B cell (primary cell): ENCODE measurements at regions of chr2 and their contacts with region 1.

Region 1: GRCh38 chr2:231463698-231464575 is at the start of gene NCL:
- DNase-seq: peak; percentile 98
- ATAC-seq: peak; percentile 51
- H3K4me3 ChIP-seq: peak within 1 kb of the TSS; percentile 62 to 97 (median 93)
- H3K4me3 Mint-ChIP-seq: peak within 1 kb of the TSS; percentile 99
- H3K27ac ChIP-seq: peak within 1 kb of the TSS; percentile 97 to 98
- H3K27ac Mint-ChIP-seq: peak within 1 kb of the TSS; percentile 100
- H3K4me1 ChIP-seq: peaks cover 29 to 33% of the 10 kb centered on the region in 2 donors
- H3K4me1 Mint-ChIP-seq: peaks cover 46% of the 10 kb centered on the region
- H3K27me3 ChIP-seq: no peaks in the 10 kb centered on the region
- H3K27me3 Mint-ChIP-seq: no peaks in the 10 kb centered on the region
- CTCF ChIP-seq: no peak
- total RNA-seq, gene NCL: 383 and 439 TPM in 2 replicates

Region 2: GRCh38 chr2:231056453-231057424 is 407.2 kb before region 1 on chr2 and contains the start of gene PSMD1:
- CTCF ChIA-PET with region 1: interaction called, 3 read pairs
- POLR2A ChIA-PET with region 1: interaction called, 4 read pairs
- intact Hi-C with region 1: loop called (anchors 5 kb)
- DNase-seq: peak; percentile 98
- ATAC-seq: peak; percentile 87
- H3K4me3 ChIP-seq: peak within 1 kb of the TSS; percentile 75 to 99 (median 90)
- H3K4me3 Mint-ChIP-seq: peak within 1 kb of the TSS; percentile 100
- H3K27ac ChIP-seq: peak within 1 kb of the TSS; percentile 85 to 86
- H3K27ac Mint-ChIP-seq: peak within 1 kb of the TSS; percentile 100
- H3K4me1 ChIP-seq: peaks cover 22 to 27% of the 10 kb centered on the region in 2 donors
- H3K4me1 Mint-ChIP-seq: peaks cover 39% of the 10 kb centered on the region
- H3K27me3 ChIP-seq: peaks cover 0 to 6% (median 0%) of the 10 kb centered on the region in 4 experiments
- H3K27me3 Mint-ChIP-seq: peaks cover 16% of the 10 kb centered on the region
- CTCF ChIP-seq: peak; percentile 91
- total RNA-seq, gene PSMD1: 45.4 and 48.2 TPM in 2 replicates

Region 3: DNA sequence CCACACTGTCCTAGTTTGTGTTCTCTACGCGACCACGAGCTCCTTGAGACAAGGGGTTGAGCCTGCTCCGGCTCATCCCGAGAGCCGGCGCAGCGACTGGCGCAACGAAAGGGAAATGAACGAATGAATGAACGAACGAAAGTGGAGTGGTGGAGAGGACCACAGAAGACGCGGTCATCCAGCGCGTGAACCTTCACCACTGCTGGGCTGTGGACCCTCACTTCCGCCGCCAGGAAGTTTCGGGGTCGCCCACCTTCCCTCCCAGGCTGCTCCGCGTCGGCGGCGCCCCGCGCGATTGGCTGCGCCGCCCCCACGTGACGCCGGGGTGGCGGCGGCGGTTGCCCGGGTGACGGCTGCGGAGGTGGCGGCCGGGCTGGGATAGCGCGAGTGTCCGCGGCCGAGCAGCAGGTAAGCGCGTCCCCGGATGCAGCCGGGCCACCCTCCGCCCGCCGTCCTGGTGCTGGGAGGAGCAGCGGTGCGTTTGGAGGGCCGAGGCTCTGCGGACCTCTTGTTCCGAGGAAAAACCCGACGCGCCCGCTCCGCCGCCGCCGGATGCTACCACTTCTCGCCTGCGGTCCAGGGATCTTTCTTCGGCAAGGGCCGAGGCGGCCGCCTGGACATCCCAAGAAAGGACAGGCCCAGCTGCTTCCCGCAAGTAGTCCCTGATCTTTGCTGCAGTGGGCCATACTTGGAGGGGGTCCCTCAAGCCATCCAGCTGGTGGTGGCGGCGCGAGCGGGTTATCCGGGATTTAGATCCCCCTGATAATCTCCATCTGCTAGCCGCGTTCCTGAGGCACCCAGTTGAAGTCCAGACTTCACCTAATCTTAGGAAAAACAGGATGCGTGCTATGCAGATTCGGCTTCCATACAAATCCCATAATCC is 265.4 kb before region 1 on chr2 and contains the start of gene ARMC9:
- CTCF ChIA-PET with region 1: no interaction called
- POLR2A ChIA-PET with region 1: no interaction called
- intact Hi-C with region 1: loop called (anchors 1 kb)
- DNase-seq: peak; percentile 84
- ATAC-seq: peak; percentile 98
- H3K4me3 ChIP-seq: peak within 1 kb of the TSS; percentile 68 to 96 (median 92)
- H3K4me3 Mint-ChIP-seq: peak within 1 kb of the TSS; percentile 95
- H3K27ac ChIP-seq: peak within 1 kb of the TSS in 1 of 2 donors; percentile 21
- H3K27ac Mint-ChIP-seq: peak within 1 kb of the TSS; percentile 50
- H3K4me1 ChIP-seq: peaks cover 8 to 12% of the 10 kb centered on the region in 2 donors
- H3K4me1 Mint-ChIP-seq: peaks cover 10% of the 10 kb centered on the region
- H3K27me3 ChIP-seq: peaks cover 0 to 5% (median 0%) of the 10 kb centered on the region in 4 experiments
- H3K27me3 Mint-ChIP-seq: peaks cover 11% of the 10 kb centered on the region
- CTCF ChIP-seq: no peak
- total RNA-seq, gene ARMC9: 5.2 and 5.4 TPM in 2 replicates

Region 4: GRCh38 chr2:231482806-231483391 is 19.0 kb after region 1 on chr2:
- CTCF ChIA-PET with region 1: interaction called, 34 read pairs
- POLR2A ChIA-PET with region 1: interaction called, 14 read pairs
- intact Hi-C with region 1: loop called (anchors 1 kb)
- DNase-seq: peak; percentile 82
- ATAC-seq: peak; percentile 85
- H3K4me3 ChIP-seq: peak overlapping the region in 4 of 5 experiments; percentile 58 to 65 (median 59)
- H3K4me3 Mint-ChIP-seq: peak overlapping the region; percentile 83
- H3K27ac ChIP-seq: peak overlapping the region; percentile 71 to 75
- H3K27ac Mint-ChIP-seq: peak overlapping the region; percentile 86
- H3K4me1 ChIP-seq: peaks cover 0 to 19% of the 10 kb centered on the region in 2 donors
- H3K4me1 Mint-ChIP-seq: peaks cover 7% of the 10 kb centered on the region
- H3K27me3 ChIP-seq: no peaks in the 10 kb centered on the region
- H3K27me3 Mint-ChIP-seq: no peaks in the 10 kb centered on the region
- CTCF ChIP-seq: peak; percentile 91

Region 5: GRCh38 chr2:231780909-231781797 is 317.2 kb after region 1 on chr2 and contains the start of gene PDE6D:
- CTCF ChIA-PET with region 1: interaction called, 3 read pairs
- POLR2A ChIA-PET with region 1: interaction called, 3 read pairs
- intact Hi-C with region 1: loop called (anchors 2 kb)
- DNase-seq: peak; percentile 98
- ATAC-seq: peak; percentile 89
- H3K4me3 ChIP-seq: peak within 1 kb of the TSS; percentile 72 to 92 (median 85)
- H3K4me3 Mint-ChIP-seq: peak within 1 kb of the TSS; percentile 100
- H3K27ac ChIP-seq: peak within 1 kb of the TSS; percentile 63 to 87
- H3K27ac Mint-ChIP-seq: peak within 1 kb of the TSS; percentile 97
- H3K4me1 ChIP-seq: peaks cover 28 to 32% of the 10 kb centered on the region in 2 donors
- H3K4me1 Mint-ChIP-seq: peaks cover 63% of the 10 kb centered on the region
- H3K27me3 ChIP-seq: no peaks in the 10 kb centered on the region
- H3K27me3 Mint-ChIP-seq: no peaks in the 10 kb centered on the region
- CTCF ChIP-seq: no peak
- total RNA-seq, gene PDE6D: 31.9 and 40.8 TPM in 2 replicates